Pancreas (tissue), 10 donors: ENCODE measurements at regions of chr12 and their contacts with region 1.

Region 1: DNA sequence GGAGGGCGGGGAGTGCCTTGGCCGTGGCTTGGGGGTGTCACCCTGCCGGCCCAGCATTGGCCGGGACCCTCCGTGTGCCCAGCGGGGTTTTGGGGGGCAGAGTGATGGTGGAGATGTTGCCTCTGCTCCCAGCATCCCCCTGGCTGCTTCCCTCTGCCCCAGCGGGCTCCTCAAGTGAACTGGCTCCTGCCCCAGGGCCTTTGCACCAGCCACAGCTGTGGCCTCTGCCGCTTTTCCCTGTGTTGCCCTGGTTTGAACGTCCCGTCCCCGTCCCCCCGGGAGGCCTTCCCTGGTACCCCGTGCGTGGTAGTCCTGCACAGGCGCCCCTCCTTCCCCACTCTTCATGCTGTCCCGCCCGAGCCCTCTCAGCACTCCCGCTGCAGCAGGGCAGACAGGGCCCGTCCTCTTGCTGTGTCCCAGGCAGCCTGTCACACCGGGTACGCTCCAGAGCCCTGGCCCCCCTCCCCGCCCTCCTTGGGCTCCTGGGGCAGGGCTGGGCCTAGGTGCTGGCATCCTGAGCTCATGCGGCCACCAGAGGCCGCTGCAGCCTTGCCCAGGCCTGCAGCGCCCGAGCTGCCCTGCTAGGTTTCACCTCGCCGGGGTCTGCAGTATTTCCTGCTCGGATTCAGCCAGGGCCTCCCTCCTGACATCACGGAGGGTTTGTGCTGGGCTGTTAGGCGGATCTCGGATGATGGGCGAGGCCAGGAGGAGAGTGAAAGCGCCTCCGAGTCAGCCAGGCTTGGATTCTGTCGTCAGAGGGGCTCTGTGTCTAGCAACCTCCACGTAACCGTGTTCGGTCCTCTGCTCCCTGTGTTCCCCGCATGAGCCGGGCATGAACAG is 9.5 kb downstream of the NOC4L start:
- DNase-seq: peak in 5 of 6 donors; percentile 43 to 85 (median 69)
- ATAC-seq: peak; percentile 91 to 97 (median 95)
- H3K4me3 ChIP-seq: no peak overlapping the region
- H3K27ac ChIP-seq: no peak overlapping the region
- H3K4me1 ChIP-seq: no peaks in the 10 kb centered on the region
- H3K27me3 ChIP-seq: no peaks in the 10 kb centered on the region
- CTCF ChIP-seq: peak; percentile 71 to 93 (median 86)

Region 2: GRCh38 chr12:132289356-132290202 is 135.9 kb after region 1 on chr12:
- intact Hi-C with region 1: no loop called
- DNase-seq: peak in 2 of 6 donors; percentile 9 to 29
- ATAC-seq: no peak
- H3K4me3 ChIP-seq: no peak overlapping the region
- H3K27ac ChIP-seq: no peak overlapping the region
- H3K4me1 ChIP-seq: no peaks in the 10 kb centered on the region
- H3K27me3 ChIP-seq: peaks cover 0 to 5% (median 2%) of the 10 kb centered on the region in 4 donors
- CTCF ChIP-seq: no peak

Region 3: GRCh38 chr12:132614861-132615578 is 461.3 kb after region 1 on chr12:
- intact Hi-C with region 1: loop called in 1 of 3 experiments (anchors 5 kb)
- DNase-seq: peak; percentile 68 to 90 (median 81)
- ATAC-seq: peak; percentile 86 to 92 (median 89)
- H3K4me3 ChIP-seq: no peak overlapping the region
- H3K27ac ChIP-seq: no peak overlapping the region
- H3K4me1 ChIP-seq: no peaks in the 10 kb centered on the region
- H3K27me3 ChIP-seq: peaks cover 0 to 33% (median 15%) of the 10 kb centered on the region in 4 donors
- CTCF ChIP-seq: peak; percentile 78 to 92 (median 82)